Esophagus squamous epithelium (tissue), 5 donors: ENCODE measurements at regions of chr2 and their contacts with region 1.

Region 1: GRCh38 chr2:26299471-26300101 is 46.4 kb upstream of the SELENOI start:
- DNase-seq: no peak
- H3K4me3 ChIP-seq: peak overlapping the region; percentile 33 to 74 (median 57)
- H3K27ac ChIP-seq: peak overlapping the region; percentile 86 to 95 (median 92)
- H3K4me1 ChIP-seq: peaks cover 22 to 75% (median 27%) of the 10 kb centered on the region in 3 donors
- H3K27me3 ChIP-seq: no peaks in the 10 kb centered on the region
- CTCF ChIP-seq: peak in 1 of 6 experiments; percentile 1
- POLR2A ChIP-seq: no peak

Region 2: DNA sequence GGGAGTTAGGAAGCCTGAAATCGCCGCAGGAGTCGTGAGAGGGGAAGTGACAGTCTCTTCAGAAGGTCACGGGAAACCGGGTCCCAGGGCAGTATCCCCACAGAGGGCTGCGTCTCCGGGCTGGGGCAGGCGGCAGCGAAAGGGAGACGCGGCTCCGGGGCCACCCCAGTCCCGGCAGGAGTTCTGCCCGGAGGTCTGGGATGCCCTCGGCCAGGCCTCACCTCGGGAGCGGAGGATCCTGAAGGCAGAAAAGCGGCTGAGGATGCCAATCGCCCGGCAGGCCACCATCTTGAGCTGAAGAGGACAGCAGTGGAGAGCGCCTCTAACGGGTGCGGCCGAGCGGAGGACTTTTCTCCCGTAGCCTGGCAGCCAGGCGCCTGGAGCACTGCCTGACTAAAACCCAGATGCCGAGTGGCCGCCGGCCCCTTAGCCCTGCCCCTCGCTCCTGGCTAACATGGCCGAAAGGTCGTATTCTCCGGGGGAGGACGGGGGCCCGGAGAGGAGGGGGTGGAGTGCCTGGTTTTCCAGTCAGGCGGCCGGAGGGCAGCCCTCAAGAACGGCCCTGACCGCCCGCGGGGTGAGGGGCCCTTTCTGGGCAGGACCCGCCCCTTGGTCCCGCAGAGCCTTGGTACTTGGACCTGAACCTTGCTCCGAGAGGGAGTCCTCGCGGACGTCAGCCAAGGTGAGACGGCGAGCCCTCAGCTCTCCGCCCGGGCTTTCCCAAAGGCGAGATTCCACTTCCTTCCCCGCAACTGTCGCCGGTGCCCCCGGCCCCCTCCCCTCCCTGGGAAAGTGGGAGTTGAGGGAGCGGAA is 55.1 kb before region 1 on chr2 and contains the starts of genes HADHA and HADHB:
- intact Hi-C with region 1: loop called (anchors 10 kb)
- DNase-seq: peak; percentile 81
- H3K4me3 ChIP-seq: peak within 1 kb of the TSS; percentile 64 to 99 (median 80)
- H3K27ac ChIP-seq: peak within 1 kb of the TSS; percentile 95 to 99 (median 96)
- H3K4me1 ChIP-seq: peaks cover 22 to 83% (median 41%) of the 10 kb centered on the region in 3 donors
- H3K27me3 ChIP-seq: no peaks in the 10 kb centered on the region
- CTCF ChIP-seq: peak in 4 of 6 experiments; percentile 6 to 43 (median 33)
- POLR2A ChIP-seq: peak in 2 of 4 donors; percentile 49 to 80
- total RNA-seq, gene HADHA: 84.7 to 161 (median 116) TPM
- total RNA-seq, gene HADHB: 57.6 to 150 (median 85.1) TPM

Region 3: DNA sequence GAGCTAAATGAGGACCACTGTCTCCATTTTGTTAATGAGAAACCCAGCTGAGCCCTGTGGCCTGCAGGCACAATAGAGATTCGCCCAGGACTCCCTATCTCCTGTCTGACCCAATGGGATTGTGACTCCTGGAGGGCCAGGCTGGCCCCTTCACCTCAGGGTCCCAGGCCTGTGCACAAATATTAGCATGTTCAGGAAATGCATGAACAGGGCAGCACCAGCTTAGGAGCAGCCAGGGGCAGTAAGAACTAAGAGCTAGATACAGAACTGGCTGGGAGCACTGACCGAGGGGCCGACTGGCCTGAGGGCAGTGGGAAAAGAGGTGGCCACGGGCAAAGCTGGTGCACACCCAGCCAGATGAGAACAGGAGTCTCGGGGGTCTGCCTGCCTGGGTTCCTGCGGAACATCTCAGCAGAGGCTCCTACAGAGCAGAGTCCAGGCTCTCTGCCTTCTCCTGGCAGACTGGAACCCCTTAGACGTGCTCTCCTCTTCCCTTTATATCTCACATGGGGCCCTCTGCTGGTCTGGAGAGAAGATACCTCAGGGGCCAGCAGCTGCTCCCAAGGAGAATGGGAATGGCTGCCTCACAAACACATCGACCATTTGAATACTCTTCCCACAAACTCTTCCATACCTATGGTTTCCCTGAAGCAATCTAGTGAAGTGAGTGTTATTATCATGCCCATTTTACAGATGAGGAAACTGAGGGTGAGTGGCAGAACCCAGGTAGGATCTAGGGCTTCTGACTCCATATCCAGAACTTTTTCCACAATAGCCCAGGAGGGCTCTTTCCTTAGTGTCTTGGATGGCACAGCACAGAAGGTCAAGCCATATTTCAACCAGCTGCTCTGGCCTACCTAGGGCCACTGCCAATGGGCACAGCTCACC is 255.9 kb after region 1 on chr2:
- intact Hi-C with region 1: no loop called
- DNase-seq: no peak
- H3K4me3 ChIP-seq: no peak overlapping the region
- H3K27ac ChIP-seq: no peak overlapping the region
- H3K4me1 ChIP-seq: no peaks in the 10 kb centered on the region
- H3K27me3 ChIP-seq: peaks cover 0 to 60% (median 3%) of the 10 kb centered on the region in 4 donors
- CTCF ChIP-seq: no peak
- POLR2A ChIP-seq: no peak